HEK293T (cell line): ENCODE measurements at regions of chr20 and their contacts with region 1.

Region 1: GRCh38 chr20:58388882-58389323 is at the start of gene VAPB:
- DNase-seq: peak; percentile 97

Region 2: DNA sequence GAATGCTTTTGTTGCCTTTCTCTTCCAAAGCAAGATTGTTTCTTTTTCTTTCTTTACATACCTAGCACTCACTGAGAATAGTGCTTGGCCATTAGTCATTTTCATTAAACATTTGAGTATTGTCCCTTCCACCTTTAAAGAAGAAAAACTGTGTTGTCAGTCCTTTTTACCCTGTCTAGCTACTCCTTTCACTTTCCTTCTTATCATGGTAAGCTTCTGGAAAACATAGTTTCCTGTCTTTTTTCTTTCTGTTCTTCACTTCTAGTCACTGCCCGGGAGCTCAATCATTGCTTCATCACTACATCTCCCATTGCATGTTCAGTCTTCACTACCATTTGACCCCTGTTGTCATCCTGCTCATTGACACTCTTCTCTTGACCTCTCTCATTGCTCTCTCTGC is 12.3 kb after region 1 on chr20:
- CTCF ChIA-PET with region 1: no interaction called
- POLR2A ChIA-PET with region 1: interaction called, 15 read pairs
- DNase-seq: no peak

Region 3: DNA sequence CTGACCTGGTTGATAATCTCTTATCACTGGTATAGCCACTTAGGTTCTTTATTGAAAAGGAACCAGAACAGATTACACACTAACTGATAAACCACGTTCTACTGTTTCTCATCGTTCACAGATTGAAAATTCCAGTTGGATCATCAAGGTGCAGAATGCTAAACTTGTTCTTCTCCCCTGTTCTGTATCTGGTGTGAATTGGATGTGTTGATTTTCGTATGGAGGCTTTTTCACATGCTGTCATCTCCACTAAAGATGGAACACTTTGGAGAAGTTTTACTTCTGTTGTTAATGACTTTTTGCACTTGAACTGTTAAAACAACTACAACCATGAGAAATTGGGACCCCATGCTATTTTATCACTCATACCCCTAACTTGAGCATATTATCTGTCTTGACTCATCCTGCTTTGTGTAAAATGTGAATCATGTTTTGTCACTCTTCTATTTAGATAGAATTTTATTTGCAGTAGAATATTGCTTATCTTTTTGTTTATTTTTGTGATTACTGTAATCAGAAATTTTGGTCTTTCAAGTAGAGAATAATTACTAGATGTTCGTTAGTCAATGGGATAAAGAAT is 17.6 kb after region 1 on chr20:
- CTCF ChIA-PET with region 1: no interaction called
- POLR2A ChIA-PET with region 1: interaction called, 15 read pairs
- DNase-seq: no peak

Region 4: DNA sequence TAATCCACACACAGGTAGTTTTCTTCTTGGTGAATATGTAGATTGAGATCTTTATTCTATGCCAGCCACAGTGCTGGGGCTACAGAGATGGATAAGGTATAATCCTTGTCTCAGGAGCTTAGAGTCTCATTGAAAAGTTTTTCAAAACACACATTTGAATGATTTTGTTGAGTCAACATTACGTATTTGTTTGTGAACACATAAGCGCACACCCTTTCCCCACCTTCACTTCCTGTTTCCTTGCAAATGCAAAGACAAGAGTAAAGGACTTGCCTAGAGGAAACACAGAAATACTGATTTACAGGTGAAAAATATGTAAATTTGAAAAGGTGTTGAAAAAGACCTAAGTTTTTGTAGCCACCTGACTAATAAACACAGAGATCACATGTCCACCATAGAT is 27.9 kb after region 1 on chr20:
- CTCF ChIA-PET with region 1: no interaction called
- POLR2A ChIA-PET with region 1: no interaction called
- DNase-seq: no peak

Region 5: DNA sequence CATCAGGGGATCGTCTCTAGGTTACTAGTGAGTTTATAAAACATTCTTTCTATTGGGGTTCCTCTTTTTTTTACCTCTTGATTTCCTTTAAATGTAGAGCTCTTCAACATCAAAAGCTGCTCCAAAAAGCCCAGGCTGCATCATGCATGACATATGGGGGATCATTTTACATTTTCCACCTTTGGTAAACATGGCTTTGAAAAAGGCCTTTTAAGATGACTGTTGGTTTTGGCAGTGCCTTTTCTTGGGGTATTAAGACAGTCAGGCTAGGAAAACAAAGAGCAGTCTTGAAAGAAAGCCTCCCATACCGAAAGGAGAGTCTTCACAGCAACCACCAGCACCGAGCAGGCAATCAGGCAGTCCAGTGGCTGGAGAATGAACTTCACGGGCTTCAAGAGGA is 376.9 kb after region 1 on chr20:
- CTCF ChIA-PET with region 1: no interaction called
- POLR2A ChIA-PET with region 1: no interaction called
- DNase-seq: no peak